Activated naive CD4-positive, alpha-beta T cell treated with anti-CD3 and anti-CD28 coated beads for 36 hours (primary cell): ENCODE measurements at regions of chr5 and their contacts with region 1.

Region 1: DNA sequence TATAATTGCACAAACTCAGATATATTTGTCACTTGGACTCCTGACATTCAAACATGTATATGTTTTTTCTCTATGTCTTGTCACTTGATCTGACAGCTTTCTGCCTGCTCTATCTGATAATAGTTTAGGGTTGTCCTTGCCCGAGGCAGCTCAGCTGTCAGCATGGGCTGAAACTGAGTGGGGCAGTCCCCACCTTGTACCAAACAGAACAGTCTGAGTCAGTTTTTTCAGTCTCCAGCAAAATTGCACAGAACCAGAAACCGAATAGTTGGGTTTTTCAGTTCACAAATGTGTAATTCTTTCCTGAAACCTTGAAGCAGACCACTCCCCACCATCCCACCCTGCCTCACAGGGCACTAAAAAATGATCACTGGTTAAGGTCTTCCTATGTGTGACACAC is 9.5 kb upstream of the HAND1 start:
- DNase-seq: peak; percentile 71
- H3K4me3 Mint-ChIP-seq: no peak overlapping the region
- H3K27ac Mint-ChIP-seq: no peak overlapping the region
- H3K4me1 Mint-ChIP-seq: peaks cover 39% of the 10 kb centered on the region
- H3K27me3 Mint-ChIP-seq: peaks cover 76% of the 10 kb centered on the region

Region 2: GRCh38 chr5:154472871-154473580 is 14.5 kb before region 1 on chr5:
- CTCF ChIA-PET with region 1: interaction called, 13 read pairs
- intact Hi-C with region 1: loop called (anchors 1 kb)
- DNase-seq: no peak
- H3K4me3 Mint-ChIP-seq: peak overlapping the region; percentile 18
- H3K27ac Mint-ChIP-seq: no peak overlapping the region
- H3K4me1 Mint-ChIP-seq: peaks cover 49% of the 10 kb centered on the region
- H3K27me3 Mint-ChIP-seq: peaks cover 80% of the 10 kb centered on the region

Region 3: GRCh38 chr5:154520861-154521453 is 33.4 kb after region 1 on chr5:
- CTCF ChIA-PET with region 1: no interaction called
- intact Hi-C with region 1: no loop called
- DNase-seq: peak; percentile 30
- H3K4me3 Mint-ChIP-seq: no peak overlapping the region
- H3K27ac Mint-ChIP-seq: no peak overlapping the region
- H3K4me1 Mint-ChIP-seq: peaks cover 1% of the 10 kb centered on the region
- H3K27me3 Mint-ChIP-seq: peaks cover 35% of the 10 kb centered on the region

Region 4: GRCh38 chr5:155594270-155594669 is 1106.7 kb after region 1 on chr5:
- CTCF ChIA-PET with region 1: no interaction called
- intact Hi-C with region 1: no loop called
- DNase-seq: no peak
- H3K4me3 Mint-ChIP-seq: no peak overlapping the region
- H3K27ac Mint-ChIP-seq: no peak overlapping the region
- H3K4me1 Mint-ChIP-seq: no peaks in the 10 kb centered on the region
- H3K27me3 Mint-ChIP-seq: no peaks in the 10 kb centered on the region